Activated CD4-positive, alpha-beta T cell treated with anti-CD3 and anti-CD28 coated beads for 36 hours (primary cell): ENCODE measurements at regions of chr9 and their contacts with region 1.

Region 1: GRCh38 chr9:133335878-133336811 is at the start of gene SURF6:
- DNase-seq: peak; percentile 97
- ATAC-seq: peak; percentile 96
- H3K4me3 Mint-ChIP-seq: peak within 1 kb of the TSS; percentile 86
- H3K27ac Mint-ChIP-seq: peak within 1 kb of the TSS; percentile 89
- H3K4me1 Mint-ChIP-seq: peaks cover 23% of the 10 kb centered on the region
- H3K27me3 Mint-ChIP-seq: no peaks in the 10 kb centered on the region
- total RNA-seq, gene SURF6: 22.4 to 24.3 TPM

Region 2: DNA sequence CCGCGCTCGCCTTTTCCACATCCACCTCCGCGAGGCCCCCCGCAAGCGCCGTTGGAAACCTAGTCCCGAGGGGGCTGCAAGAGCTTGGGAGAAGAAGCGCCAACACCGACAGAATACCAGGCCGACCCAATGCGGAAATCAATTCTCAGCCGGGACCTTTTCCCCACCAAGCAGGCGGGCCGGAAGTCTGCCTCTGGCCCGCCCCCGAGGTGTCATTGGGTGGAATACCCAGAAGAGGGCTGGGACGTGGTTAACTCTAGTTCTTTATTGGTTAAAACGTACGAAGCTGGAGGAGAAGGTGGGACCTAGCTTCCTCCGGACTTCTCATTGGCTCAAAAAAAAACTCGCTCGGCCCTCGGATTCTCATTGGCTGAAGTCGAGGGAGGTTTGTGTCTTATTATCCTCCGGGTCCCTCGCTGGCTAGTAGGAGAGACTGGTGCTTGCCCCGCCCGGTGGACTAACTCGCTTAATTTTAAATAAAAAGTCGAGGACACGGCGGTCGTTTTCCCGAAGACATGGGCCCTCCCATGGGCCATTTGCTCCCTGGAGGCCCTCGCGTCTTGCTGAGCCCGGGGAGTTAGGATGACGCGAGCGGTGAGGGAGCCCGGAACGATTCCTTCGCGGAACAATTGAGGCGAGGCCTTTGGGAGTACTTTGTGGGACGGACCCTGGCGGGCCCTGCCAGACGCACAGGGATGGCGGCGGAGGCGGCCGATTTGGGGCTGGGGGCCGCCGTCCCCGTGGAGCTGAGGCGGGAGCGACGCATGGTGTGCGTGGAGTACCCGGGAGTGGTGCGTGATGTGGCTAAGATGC is 305.6 kb before region 1 on chr9 and contains the start of gene GTF3C5:
- CTCF ChIA-PET with region 1: no interaction called
- POLR2A ChIA-PET with region 1: interaction called, 4 read pairs
- intact Hi-C with region 1: loop called in 1 of 2 experiments (anchors 1 kb)
- DNase-seq: peak; percentile 95
- ATAC-seq: peak; percentile 98
- H3K4me3 Mint-ChIP-seq: peak within 1 kb of the TSS; percentile 94
- H3K27ac Mint-ChIP-seq: peak within 1 kb of the TSS; percentile 95
- H3K4me1 Mint-ChIP-seq: peaks cover 41% of the 10 kb centered on the region
- H3K27me3 Mint-ChIP-seq: no peaks in the 10 kb centered on the region
- total RNA-seq, gene GTF3C5: 81.3 to 84.5 TPM

Region 3: GRCh38 chr9:133238851-133239532 is 97.2 kb before region 1 on chr9:
- CTCF ChIA-PET with region 1: interaction called, 7 read pairs
- POLR2A ChIA-PET with region 1: no interaction called
- intact Hi-C with region 1: loop called in 1 of 2 experiments (anchors 2 kb)
- DNase-seq: peak; percentile 88
- ATAC-seq: peak; percentile 97
- H3K4me3 Mint-ChIP-seq: peak overlapping the region; percentile 52
- H3K27ac Mint-ChIP-seq: no peak overlapping the region
- H3K4me1 Mint-ChIP-seq: peaks cover 7% of the 10 kb centered on the region
- H3K27me3 Mint-ChIP-seq: peaks cover 5% of the 10 kb centered on the region

Region 4: GRCh38 chr9:133356391-133357091 is 20.4 kb after region 1 on chr9 and contains the starts of genes SURF1 and SURF2:
- CTCF ChIA-PET with region 1: no interaction called
- POLR2A ChIA-PET with region 1: no interaction called
- intact Hi-C with region 1: loop called in 1 of 2 experiments (anchors 1 kb)
- DNase-seq: peak; percentile 96
- ATAC-seq: peak; percentile 84
- H3K4me3 Mint-ChIP-seq: peak within 1 kb of the TSS; percentile 91
- H3K27ac Mint-ChIP-seq: peak within 1 kb of the TSS; percentile 85
- H3K4me1 Mint-ChIP-seq: peaks cover 52% of the 10 kb centered on the region
- H3K27me3 Mint-ChIP-seq: no peaks in the 10 kb centered on the region
- total RNA-seq, gene SURF1: 17.4 to 29.1 TPM
- total RNA-seq, gene SURF2: 17.3 to 21.8 TPM

Region 5: GRCh38 chr9:133478851-133479711 is 142.9 kb after region 1 on chr9 and contains the start of gene SLC2A6:
- CTCF ChIA-PET with region 1: no interaction called
- POLR2A ChIA-PET with region 1: no interaction called
- intact Hi-C with region 1: loop called in 1 of 2 experiments (anchors 1 kb)
- DNase-seq: peak; percentile 89
- ATAC-seq: peak; percentile 100
- H3K4me3 Mint-ChIP-seq: peak within 1 kb of the TSS; percentile 67
- H3K27ac Mint-ChIP-seq: no peak within 1 kb of the TSS
- H3K4me1 Mint-ChIP-seq: peaks cover 6% of the 10 kb centered on the region
- H3K27me3 Mint-ChIP-seq: no peaks in the 10 kb centered on the region
- total RNA-seq, gene SLC2A6: 1.6 to 1.9 TPM